ENCODE measurements at regions of chr12 and their contacts with region 1.

Region 1: DNA sequence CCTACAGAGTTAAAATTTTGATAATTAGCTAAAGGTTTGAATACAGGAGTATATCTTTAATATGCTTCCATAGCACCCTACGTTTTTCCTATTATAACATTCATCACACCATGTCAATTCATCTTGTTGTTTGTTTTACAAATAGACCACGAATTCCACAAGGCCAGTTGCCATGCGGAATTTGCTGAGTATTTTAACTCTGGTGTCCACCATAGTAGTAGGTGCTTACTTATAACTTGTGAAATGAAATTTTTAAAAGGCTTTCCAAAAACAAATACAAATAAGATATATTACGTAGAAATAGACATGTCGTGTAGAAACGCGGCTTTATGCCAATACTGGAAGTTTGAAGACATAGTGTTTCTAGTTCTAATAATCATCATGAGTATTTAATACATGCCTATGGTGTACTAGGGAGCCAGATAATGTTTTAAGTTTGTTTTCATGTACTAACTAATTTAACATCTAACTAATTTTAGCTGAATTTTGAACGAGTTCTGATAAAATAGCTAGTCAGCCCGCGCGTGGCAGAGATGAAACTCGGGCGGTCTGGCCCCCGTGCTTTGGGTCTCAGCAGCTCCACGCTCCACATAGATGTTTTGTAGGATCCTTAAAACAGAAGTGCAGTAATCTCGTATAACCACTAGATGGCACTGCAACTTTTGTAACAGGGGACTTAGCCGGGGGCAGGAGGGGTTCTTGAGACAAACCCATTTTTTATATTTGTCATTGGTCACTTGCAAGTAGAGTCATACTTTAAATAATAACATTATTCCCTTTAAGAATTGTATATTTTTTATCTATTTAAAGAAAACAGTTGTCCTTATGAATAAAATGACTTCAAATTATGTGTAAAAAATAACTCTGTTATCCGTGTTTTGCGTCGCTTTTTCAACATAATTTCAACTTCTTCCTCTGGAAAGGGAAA is 10.2 kb downstream of the CD69 start:
- DNase-seq: peak in 13 of 14 experiments; percentile 13 to 87 (median 44)
- ATAC-seq: peak; percentile 48
- H3K4me3 ChIP-seq: peak overlapping the region; percentile 10
- H3K4me3 Mint-ChIP-seq: peak overlapping the region; percentile 63
- H3K27ac ChIP-seq: no peak overlapping the region
- H3K27ac Mint-ChIP-seq: peak overlapping the region; percentile 80
- H3K4me1 ChIP-seq: peaks cover 14% of the 10 kb centered on the region
- H3K4me1 Mint-ChIP-seq: peaks cover 54% of the 10 kb centered on the region
- H3K27me3 ChIP-seq: no peaks in the 10 kb centered on the region
- H3K27me3 Mint-ChIP-seq: no peaks in the 10 kb centered on the region
- CTCF ChIP-seq: peak; percentile 86

Region 2: DNA sequence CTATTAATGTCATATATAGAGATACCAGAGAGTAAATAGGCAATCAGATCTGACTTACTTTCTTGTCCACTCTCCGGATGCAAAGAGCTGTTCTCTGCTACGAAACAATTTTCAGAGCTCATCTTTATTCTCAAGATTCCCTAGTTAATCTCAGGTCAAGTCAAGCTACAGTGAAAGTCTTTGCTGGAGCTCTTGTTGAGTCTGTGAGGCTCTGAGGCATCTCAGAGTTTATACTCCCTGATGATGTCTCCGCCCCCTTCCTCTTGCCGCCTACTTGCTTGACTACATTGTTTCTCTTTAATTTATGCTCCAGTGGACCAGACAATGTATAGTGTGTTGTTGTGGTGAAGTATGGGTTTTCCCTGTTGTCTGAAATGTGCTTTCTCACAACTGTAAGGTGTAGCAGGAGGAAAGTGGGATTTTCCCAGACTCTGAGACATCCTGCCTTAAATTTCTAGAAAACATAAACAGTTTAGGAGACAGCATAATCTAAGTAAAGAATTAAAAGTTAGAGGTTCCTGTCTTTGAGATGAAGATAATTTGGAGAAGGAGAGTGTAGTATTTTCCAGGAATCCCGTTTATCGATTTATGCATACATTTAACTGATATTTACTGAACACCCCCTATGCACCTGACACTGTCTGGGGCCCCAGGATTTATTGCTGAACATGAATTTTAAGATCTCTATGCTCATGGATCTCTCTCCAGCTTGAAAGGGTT is 10.3 kb after region 1 on chr12 and contains the start of gene CD69:
- CTCF ChIA-PET with region 1: interaction called, 53 read pairs
- POLR2A ChIA-PET with region 1: interaction called, 192 read pairs
- intact Hi-C with region 1: loop called in 1 of 2 experiments (anchors 1 kb)
- DNase-seq: peak; percentile 56 to 96 (median 69)
- ATAC-seq: peak; percentile 43
- H3K4me3 ChIP-seq: peak within 1 kb of the TSS; percentile 79
- H3K4me3 Mint-ChIP-seq: peak within 1 kb of the TSS; percentile 97
- H3K27ac ChIP-seq: peak within 1 kb of the TSS; percentile 98
- H3K27ac Mint-ChIP-seq: peak within 1 kb of the TSS; percentile 99
- H3K4me1 ChIP-seq: peaks cover 34% of the 10 kb centered on the region
- H3K4me1 Mint-ChIP-seq: peaks cover 68% of the 10 kb centered on the region
- H3K27me3 ChIP-seq: no peaks in the 10 kb centered on the region
- H3K27me3 Mint-ChIP-seq: no peaks in the 10 kb centered on the region
- CTCF ChIP-seq: no peak
- total RNA-seq, gene CD69: 631 to 659 TPM

Region 3: DNA sequence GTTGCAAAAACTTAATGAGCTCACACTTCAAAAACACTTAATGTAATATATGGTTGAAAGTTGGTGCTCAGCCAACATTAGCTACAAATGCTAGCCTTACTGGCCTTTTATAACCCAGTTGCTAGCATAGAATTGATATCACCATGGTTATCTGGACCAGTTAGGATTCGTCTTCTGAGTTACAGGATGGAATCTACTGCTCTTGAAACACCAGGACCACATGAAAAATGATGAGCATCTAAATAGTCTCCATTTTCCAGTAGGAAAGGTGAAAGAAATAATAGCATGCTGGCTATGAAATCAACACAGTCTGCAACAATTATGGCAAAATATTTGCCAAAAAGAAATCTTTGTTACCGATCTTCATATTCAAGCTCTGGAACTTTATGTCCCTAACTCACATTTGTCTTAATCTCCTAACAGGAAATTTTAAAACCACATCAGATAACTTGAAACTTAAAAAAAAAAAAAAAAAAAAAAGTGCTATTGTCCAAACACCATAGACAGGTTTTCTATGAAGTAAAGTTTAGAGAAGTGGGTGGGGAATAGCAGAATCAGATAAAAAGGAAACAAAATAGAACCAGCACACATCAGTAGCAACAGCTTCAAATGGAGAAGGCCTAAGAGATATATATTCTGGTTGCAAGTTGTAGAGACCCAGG is 22.8 kb after region 1 on chr12:
- CTCF ChIA-PET with region 1: interaction called, 14 read pairs
- POLR2A ChIA-PET with region 1: interaction called, 9 read pairs
- intact Hi-C with region 1: no loop called
- DNase-seq: peak in 3 of 14 experiments; percentile 49 to 68 (median 53)
- ATAC-seq: peak; percentile 65
- H3K4me3 ChIP-seq: peak overlapping the region; percentile 2
- H3K4me3 Mint-ChIP-seq: peak overlapping the region; percentile 67
- H3K27ac ChIP-seq: peak overlapping the region in 1 of 2 donors; percentile 46
- H3K27ac Mint-ChIP-seq: peak overlapping the region; percentile 54
- H3K4me1 ChIP-seq: peaks cover 23% of the 10 kb centered on the region
- H3K4me1 Mint-ChIP-seq: peaks cover 89% of the 10 kb centered on the region
- H3K27me3 ChIP-seq: no peaks in the 10 kb centered on the region
- H3K27me3 Mint-ChIP-seq: no peaks in the 10 kb centered on the region
- CTCF ChIP-seq: no peak

Region 4: GRCh38 chr12:9797722-9798619 is 47.4 kb after region 1 on chr12:
- CTCF ChIA-PET with region 1: interaction called, 185 read pairs
- POLR2A ChIA-PET with region 1: interaction called, 253 read pairs
- intact Hi-C with region 1: loop called (anchors 1 kb)
- DNase-seq: peak; percentile 40 to 91 (median 56)
- ATAC-seq: peak; percentile 95
- H3K4me3 ChIP-seq: no peak overlapping the region
- H3K4me3 Mint-ChIP-seq: peak overlapping the region; percentile 52
- H3K27ac ChIP-seq: peak overlapping the region in 1 of 2 donors; percentile 42
- H3K27ac Mint-ChIP-seq: peak overlapping the region; percentile 5
- H3K4me1 ChIP-seq: peaks cover 19% of the 10 kb centered on the region
- H3K4me1 Mint-ChIP-seq: peaks cover 51% of the 10 kb centered on the region
- H3K27me3 ChIP-seq: no peaks in the 10 kb centered on the region
- H3K27me3 Mint-ChIP-seq: no peaks in the 10 kb centered on the region
- CTCF ChIP-seq: peak; percentile 91

Region 5: DNA sequence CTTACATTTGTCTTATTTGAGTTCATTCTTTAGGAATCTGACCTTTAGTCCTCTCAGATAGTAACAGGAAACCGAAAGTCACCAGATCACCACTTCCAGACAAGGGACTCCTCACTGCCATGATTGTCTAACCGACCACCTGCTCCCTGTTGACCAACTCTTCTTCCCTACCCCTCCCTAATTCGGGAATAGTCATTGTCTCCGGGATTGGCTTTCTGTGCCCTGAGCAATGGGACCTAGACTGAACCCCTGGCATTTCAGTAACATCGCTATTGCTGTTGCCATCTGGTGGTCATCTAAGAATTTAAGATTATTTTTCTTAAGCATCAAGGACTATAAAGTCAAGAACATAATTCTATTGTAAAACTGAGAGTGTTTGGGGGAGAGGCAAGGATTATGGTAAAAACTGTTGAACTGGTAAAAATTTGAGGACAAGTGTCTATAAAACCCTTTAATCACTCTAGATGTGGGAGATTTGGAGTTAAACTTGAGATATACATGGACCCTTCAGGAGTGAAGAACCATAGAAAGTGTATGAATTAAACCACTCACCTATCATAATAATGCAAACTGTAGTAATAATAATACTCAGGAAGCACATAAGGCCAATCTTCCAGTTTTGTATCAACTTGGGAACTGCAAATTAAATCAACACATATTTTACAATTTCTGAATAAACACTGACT is 175.3 kb after region 1 on chr12:
- CTCF ChIA-PET with region 1: interaction called, 5 read pairs
- POLR2A ChIA-PET with region 1: no interaction called
- intact Hi-C with region 1: loop called (anchors 1 to 2 kb)
- DNase-seq: peak in 5 of 14 experiments; percentile 9 to 70 (median 57)
- ATAC-seq: peak; percentile 48
- H3K4me3 ChIP-seq: peak overlapping the region; percentile 21
- H3K4me3 Mint-ChIP-seq: peak overlapping the region; percentile 51
- H3K27ac ChIP-seq: no peak overlapping the region
- H3K27ac Mint-ChIP-seq: no peak overlapping the region
- H3K4me1 ChIP-seq: no peaks in the 10 kb centered on the region
- H3K4me1 Mint-ChIP-seq: peaks cover 9% of the 10 kb centered on the region
- H3K27me3 ChIP-seq: no peaks in the 10 kb centered on the region
- H3K27me3 Mint-ChIP-seq: no peaks in the 10 kb centered on the region
- CTCF ChIP-seq: peak; percentile 75

Region 6: GRCh38 chr12:10140001-10140400 is 389.5 kb after region 1 on chr12:
- CTCF ChIA-PET with region 1: interaction called, 4 read pairs
- POLR2A ChIA-PET with region 1: no interaction called
- intact Hi-C with region 1: loop called (anchors 1 to 5 kb)
- DNase-seq: peak in 13 of 14 experiments; percentile 10 to 74 (median 22)
- ATAC-seq: peak; percentile 60
- H3K4me3 ChIP-seq: no peak overlapping the region
- H3K4me3 Mint-ChIP-seq: no peak overlapping the region
- H3K27ac ChIP-seq: no peak overlapping the region
- H3K27ac Mint-ChIP-seq: no peak overlapping the region
- H3K4me1 ChIP-seq: no peaks in the 10 kb centered on the region
- H3K4me1 Mint-ChIP-seq: no peaks in the 10 kb centered on the region
- H3K27me3 ChIP-seq: peaks cover 0 to 4% of the 10 kb centered on the region in 2 experiments
- H3K27me3 Mint-ChIP-seq: peaks cover 4% of the 10 kb centered on the region
- CTCF ChIP-seq: peak; percentile 18

Region 7: GRCh38 chr12:10167588-10167987 is 417.0 kb after region 1 on chr12:
- CTCF ChIA-PET with region 1: no interaction called
- POLR2A ChIA-PET with region 1: no interaction called
- intact Hi-C with region 1: no loop called
- DNase-seq: peak in 3 of 14 experiments; percentile 18 to 62 (median 49)
- ATAC-seq: no peak
- H3K4me3 ChIP-seq: no peak overlapping the region
- H3K4me3 Mint-ChIP-seq: no peak overlapping the region
- H3K27ac ChIP-seq: no peak overlapping the region
- H3K27ac Mint-ChIP-seq: no peak overlapping the region
- H3K4me1 ChIP-seq: no peaks in the 10 kb centered on the region
- H3K4me1 Mint-ChIP-seq: no peaks in the 10 kb centered on the region
- H3K27me3 ChIP-seq: peaks cover 0 to 3% of the 10 kb centered on the region in 2 experiments
- H3K27me3 Mint-ChIP-seq: peaks cover 6% of the 10 kb centered on the region
- CTCF ChIP-seq: no peak

Region 8: DNA sequence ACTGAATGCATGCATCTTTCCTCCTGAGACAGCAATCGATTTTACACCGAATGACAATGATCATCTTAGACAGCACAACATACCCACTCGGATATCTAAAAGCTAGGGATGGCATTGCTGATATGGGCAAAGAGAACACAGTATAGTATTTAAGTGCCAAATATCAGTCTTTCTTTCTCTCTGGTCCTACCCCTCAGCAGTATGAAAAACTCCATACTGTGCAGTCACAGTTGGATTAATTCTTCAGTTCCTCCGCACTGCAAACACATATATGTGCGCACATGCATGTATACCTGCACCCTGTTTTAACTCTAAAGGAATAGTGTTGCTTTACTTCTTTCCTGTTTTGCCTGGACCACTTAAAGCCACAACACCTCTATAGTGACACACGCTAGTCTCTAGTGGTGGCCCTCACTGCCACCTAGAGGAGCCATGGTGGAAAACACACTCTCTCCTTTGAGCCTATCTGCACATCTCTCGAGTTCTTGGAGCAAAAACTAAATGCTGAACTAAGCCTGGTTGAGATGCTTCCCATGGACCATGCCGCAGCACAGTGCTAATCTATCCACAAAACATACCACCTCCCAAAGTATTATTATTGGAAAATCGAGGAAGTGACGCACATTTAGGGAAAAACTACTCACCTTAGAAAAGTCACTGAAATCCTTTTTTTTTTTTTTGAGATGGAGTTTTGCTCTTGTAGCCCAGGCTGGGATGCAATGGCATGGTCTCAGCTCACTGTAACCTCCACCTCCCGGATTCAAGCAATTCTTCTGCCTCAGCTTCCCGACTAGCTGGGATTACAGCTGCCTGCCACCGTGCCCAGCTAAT is 440.2 kb after region 1 on chr12:
- CTCF ChIA-PET with region 1: no interaction called
- POLR2A ChIA-PET with region 1: no interaction called
- intact Hi-C with region 1: loop called (anchors 5 kb)
- DNase-seq: peak; percentile 23 to 75 (median 40)
- ATAC-seq: peak; percentile 100
- H3K4me3 ChIP-seq: no peak overlapping the region
- H3K4me3 Mint-ChIP-seq: no peak overlapping the region
- H3K27ac ChIP-seq: no peak overlapping the region
- H3K27ac Mint-ChIP-seq: no peak overlapping the region
- H3K4me1 ChIP-seq: no peaks in the 10 kb centered on the region
- H3K4me1 Mint-ChIP-seq: peaks cover 6% of the 10 kb centered on the region
- H3K27me3 ChIP-seq: peaks cover 0 to 6% of the 10 kb centered on the region in 2 experiments
- H3K27me3 Mint-ChIP-seq: peaks cover 25% of the 10 kb centered on the region
- CTCF ChIP-seq: peak; percentile 80

Region 9: DNA sequence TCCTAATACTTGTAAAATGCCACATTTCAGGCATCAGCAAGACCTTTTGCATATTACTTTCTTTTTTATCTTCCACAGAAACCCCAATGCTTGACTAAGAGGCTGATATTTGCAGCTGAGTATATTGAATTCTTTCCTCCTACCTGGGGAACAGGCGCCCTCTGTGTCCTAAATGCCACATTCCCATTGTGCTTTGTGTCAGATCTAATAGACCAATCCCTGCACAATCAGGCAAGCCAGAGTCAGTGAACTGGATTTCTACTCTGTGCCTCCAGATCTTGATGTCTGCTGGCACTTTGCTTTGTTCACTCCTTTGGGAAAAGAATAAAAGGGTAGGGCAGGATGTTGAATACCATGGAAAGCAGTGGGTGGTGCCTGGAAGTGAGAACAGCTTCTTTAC is 1458.6 kb after region 1 on chr12:
- CTCF ChIA-PET with region 1: no interaction called
- POLR2A ChIA-PET with region 1: no interaction called
- intact Hi-C with region 1: no loop called
- DNase-seq: no peak
- ATAC-seq: no peak
- H3K4me3 ChIP-seq: no peak overlapping the region
- H3K4me3 Mint-ChIP-seq: no peak overlapping the region
- H3K27ac ChIP-seq: no peak overlapping the region
- H3K27ac Mint-ChIP-seq: no peak overlapping the region
- H3K4me1 ChIP-seq: no peaks in the 10 kb centered on the region
- H3K4me1 Mint-ChIP-seq: no peaks in the 10 kb centered on the region
- H3K27me3 ChIP-seq: no peaks in the 10 kb centered on the region
- H3K27me3 Mint-ChIP-seq: no peaks in the 10 kb centered on the region
- CTCF ChIP-seq: no peak